Posterior cingulate gyrus (tissue), 11 donors: ENCODE measurements at regions of chr7 and their contacts with region 1.

Region 1: GRCh38 chr7:134605973-134606923 is 40.4 kb upstream of the BPGM start:
- DNase-seq: peak in 7 of 10 donors; percentile 48 to 94 (median 74)

Region 2: GRCh38 chr7:134432296-134433152 is 173.7 kb before region 1 on chr7:
- intact Hi-C with region 1: loop called (anchors 1 kb)
- DNase-seq: peak; percentile 50 to 95 (median 73)